ENCODE measurements at regions of chr18 and their contacts with region 1.

Region 1: GRCh38 chr18:12934454-12935071 is 13.2 kb upstream of the SEH1L start:
- DNase-seq: peak; percentile 92
- ATAC-seq: peak; percentile 95
- H3K4me3 ChIP-seq: no peak overlapping the region; the same call in 1 of the 2 replicates
- H3K27ac ChIP-seq: no peak overlapping the region
- H3K4me1 ChIP-seq: peaks cover 6% of the 10 kb centered on the region; the same call in 1 of the 2 replicates
- H3K27me3 ChIP-seq: no peaks in the 10 kb centered on the region
- CTCF ChIP-seq: peak; percentile 99

Region 2: GRCh38 chr18:12391618-12392165 is 542.9 kb before region 1 on chr18:
- CTCF ChIA-PET with region 1: no interaction called
- POLR2A ChIA-PET with region 1: no interaction called
- intact Hi-C with region 1: loop called (anchors 5 kb)
- DNase-seq: peak; percentile 77
- ATAC-seq: peak; percentile 56
- H3K4me3 ChIP-seq: no peak overlapping the region
- H3K27ac ChIP-seq: no peak overlapping the region
- H3K4me1 ChIP-seq: peaks cover 29% of the 10 kb centered on the region
- H3K27me3 ChIP-seq: no peaks in the 10 kb centered on the region
- CTCF ChIP-seq: peak; percentile 97

Region 3: GRCh38 chr18:12686100-12686499 is 248.5 kb before region 1 on chr18:
- CTCF ChIA-PET with region 1: no interaction called
- POLR2A ChIA-PET with region 1: no interaction called
- intact Hi-C with region 1: loop called (anchors 1 kb)
- DNase-seq: peak; percentile 57
- ATAC-seq: peak; percentile 96
- H3K4me3 ChIP-seq: no peak overlapping the region
- H3K27ac ChIP-seq: no peak overlapping the region
- H3K4me1 ChIP-seq: no peaks in the 10 kb centered on the region
- H3K27me3 ChIP-seq: no peaks in the 10 kb centered on the region
- CTCF ChIP-seq: peak; percentile 56; the same call in 1 of the 2 replicates

Region 4: DNA sequence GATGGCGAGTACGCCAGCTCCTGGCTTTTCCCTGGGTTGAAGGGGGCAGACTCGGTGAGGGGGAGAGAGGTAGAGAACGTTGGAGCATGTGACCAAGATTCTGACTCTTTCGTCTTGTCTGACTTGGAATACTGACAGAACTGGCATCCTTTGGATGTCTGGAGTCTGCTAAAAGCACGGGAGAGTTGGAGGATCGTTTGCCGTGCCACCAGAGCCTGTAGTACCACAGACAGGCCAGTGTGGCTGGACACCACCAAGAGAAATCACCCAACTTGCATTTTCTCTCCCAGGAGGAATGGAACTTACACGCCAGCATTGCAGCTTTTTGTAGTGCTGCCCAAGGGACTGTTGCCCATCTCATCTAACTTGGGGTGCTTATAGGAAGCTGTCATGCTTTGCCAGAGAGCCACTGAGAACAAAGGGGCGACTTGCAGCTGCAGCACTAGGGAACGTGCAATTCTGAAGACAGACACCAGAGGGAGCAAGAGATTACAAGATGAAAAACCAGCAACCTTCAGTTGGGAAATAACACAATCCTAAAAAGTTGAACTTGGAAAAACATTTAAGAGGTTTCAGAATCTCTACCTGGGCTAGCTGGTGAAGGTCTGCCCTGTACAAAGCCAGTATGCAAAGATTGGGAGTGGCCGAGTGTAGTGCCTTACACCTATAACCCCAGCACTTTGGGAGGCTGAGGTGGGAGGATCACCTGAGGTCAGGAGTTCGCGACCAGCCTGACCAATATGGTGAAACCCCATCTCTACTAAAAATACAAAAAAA is 207.6 kb before region 1 on chr18:
- CTCF ChIA-PET with region 1: interaction called, 6 read pairs
- POLR2A ChIA-PET with region 1: no interaction called
- intact Hi-C with region 1: loop called (anchors 1 kb)
- DNase-seq: peak; percentile 92
- ATAC-seq: peak; percentile 74
- H3K4me3 ChIP-seq: no peak overlapping the region
- H3K27ac ChIP-seq: no peak overlapping the region
- H3K4me1 ChIP-seq: no peaks in the 10 kb centered on the region
- H3K27me3 ChIP-seq: no peaks in the 10 kb centered on the region
- CTCF ChIP-seq: peak; percentile 94

Region 5: GRCh38 chr18:12890506-12890905 is 44.1 kb before region 1 on chr18:
- CTCF ChIA-PET with region 1: interaction called, 5 read pairs
- POLR2A ChIA-PET with region 1: no interaction called
- intact Hi-C with region 1: loop called (anchors 5 kb)
- DNase-seq: peak; percentile 22
- ATAC-seq: peak; percentile 25; the same call in 1 of the 2 replicates
- H3K4me3 ChIP-seq: no peak overlapping the region
- H3K27ac ChIP-seq: no peak overlapping the region
- H3K4me1 ChIP-seq: peaks cover 10% of the 10 kb centered on the region
- H3K27me3 ChIP-seq: no peaks in the 10 kb centered on the region
- CTCF ChIP-seq: no peak

Measured in PC-3 (cell line).